AG04450 (cell line): ENCODE measurements at regions of chr20 and their contacts with region 1.

Region 1: DNA sequence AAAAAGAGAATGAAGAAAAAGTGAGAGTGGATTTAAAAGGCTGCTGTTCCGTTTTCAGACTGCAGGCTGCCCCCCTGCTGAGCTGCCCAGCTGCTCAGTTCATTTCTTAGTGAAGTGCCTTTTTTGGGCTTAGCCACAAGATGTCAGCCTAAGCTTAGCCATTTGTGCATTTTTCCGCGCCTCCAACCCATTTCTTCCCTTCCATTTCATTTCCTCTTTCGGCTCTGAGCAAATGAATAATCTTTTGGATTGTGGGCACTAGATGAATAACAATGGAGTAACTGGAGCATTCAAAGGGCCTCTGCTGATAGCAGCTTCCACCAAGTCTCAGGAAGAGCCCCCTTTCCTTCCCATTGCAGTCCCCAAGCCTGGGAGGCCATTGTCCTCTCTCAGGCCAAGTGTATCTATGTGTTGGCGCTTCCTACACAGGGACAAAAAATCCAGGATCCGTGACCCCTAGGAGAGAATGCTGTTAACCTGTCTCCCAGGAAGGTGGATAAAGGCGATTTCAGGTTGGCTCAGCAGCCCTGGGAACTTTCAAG is 83.5 kb upstream of the SPTLC3 start:
- DNase-seq: peak; percentile 77
- H3K4me3 ChIP-seq: no peak overlapping the region
- H3K27ac ChIP-seq: no peak overlapping the region
- H3K27me3 ChIP-seq: peaks cover 18% of the 10 kb centered on the region
- CTCF ChIP-seq: peak; percentile 99

Region 2: DNA sequence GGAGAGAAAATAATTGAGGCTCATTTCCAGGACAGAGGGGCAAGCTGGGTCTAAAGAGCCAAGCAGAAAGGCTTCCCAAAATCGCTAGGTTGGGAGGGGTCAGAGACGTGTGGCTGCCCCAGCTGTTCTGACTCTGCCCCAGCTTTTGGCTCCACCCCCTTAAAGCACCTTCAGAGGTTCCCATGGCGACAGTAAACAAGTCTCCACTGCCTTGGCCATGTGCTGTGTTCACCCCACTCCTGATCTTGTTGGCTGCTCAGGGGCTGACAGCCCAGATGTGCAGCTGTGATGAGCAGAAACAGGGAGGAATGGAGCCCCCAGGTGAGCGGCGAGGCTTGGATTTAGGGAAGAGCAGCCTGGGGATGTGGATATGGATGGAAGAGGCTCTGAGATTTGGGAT is 10.8 kb after region 1 on chr20:
- CTCF ChIA-PET with region 1: interaction called, 26 read pairs
- POLR2A ChIA-PET with region 1: no interaction called
- DNase-seq: no peak
- H3K4me3 ChIP-seq: no peak overlapping the region
- H3K27ac ChIP-seq: no peak overlapping the region
- H3K27me3 ChIP-seq: no peaks in the 10 kb centered on the region
- CTCF ChIP-seq: no peak

Region 3: DNA sequence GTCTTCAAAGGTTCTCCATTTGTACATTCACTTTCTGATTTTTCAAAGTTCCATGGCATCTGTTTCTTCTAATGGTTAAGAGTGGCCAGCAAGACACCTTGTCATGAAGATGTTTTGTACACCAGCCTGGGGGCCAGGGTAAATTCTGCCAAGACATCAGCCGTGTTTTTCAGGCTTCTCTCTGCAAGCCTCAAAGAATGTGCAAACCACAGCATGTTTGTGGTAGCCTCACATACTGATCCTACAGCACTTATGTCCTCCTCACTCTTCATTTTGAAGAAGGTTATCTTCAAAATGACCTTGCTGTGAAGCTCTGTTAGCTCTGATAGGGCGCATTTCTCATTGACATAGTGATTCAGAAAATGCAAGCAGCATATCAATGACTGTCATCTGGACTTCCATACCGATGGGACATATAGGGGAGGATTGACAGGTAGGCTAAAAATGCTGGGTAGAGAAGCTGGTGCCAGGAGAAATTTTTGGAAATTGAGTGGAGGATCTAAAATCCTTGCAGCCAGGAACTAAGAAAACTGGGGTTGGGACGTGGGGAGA is 24.2 kb after region 1 on chr20:
- CTCF ChIA-PET with region 1: interaction called, 13 read pairs
- POLR2A ChIA-PET with region 1: no interaction called
- DNase-seq: no peak
- H3K4me3 ChIP-seq: no peak overlapping the region
- H3K27ac ChIP-seq: no peak overlapping the region
- H3K27me3 ChIP-seq: no peaks in the 10 kb centered on the region
- CTCF ChIP-seq: no peak

Region 4: GRCh38 chr20:13105864-13106457 is 180.7 kb after region 1 on chr20:
- CTCF ChIA-PET with region 1: interaction called, 67 read pairs
- POLR2A ChIA-PET with region 1: no interaction called
- DNase-seq: no peak
- H3K4me3 ChIP-seq: no peak overlapping the region
- H3K27ac ChIP-seq: no peak overlapping the region
- H3K27me3 ChIP-seq: no peaks in the 10 kb centered on the region
- CTCF ChIP-seq: peak; percentile 78

Region 5: GRCh38 chr20:13113731-13114130 is 188.4 kb after region 1 on chr20:
- CTCF ChIA-PET with region 1: interaction called, 67 read pairs
- POLR2A ChIA-PET with region 1: no interaction called
- DNase-seq: no peak
- H3K4me3 ChIP-seq: no peak overlapping the region
- H3K27ac ChIP-seq: no peak overlapping the region
- H3K27me3 ChIP-seq: peaks cover 3% of the 10 kb centered on the region
- CTCF ChIP-seq: no peak

Region 6: GRCh38 chr20:13212750-13213149 is 287.5 kb after region 1 on chr20:
- CTCF ChIA-PET with region 1: no interaction called
- POLR2A ChIA-PET with region 1: no interaction called
- DNase-seq: no peak
- H3K4me3 ChIP-seq: no peak overlapping the region
- H3K27ac ChIP-seq: no peak overlapping the region
- H3K27me3 ChIP-seq: peaks cover 8% of the 10 kb centered on the region
- CTCF ChIP-seq: no peak